Breast epithelium (tissue), 4 donors: ENCODE measurements at regions of chr20 and their contacts with region 1.

Region 1: DNA sequence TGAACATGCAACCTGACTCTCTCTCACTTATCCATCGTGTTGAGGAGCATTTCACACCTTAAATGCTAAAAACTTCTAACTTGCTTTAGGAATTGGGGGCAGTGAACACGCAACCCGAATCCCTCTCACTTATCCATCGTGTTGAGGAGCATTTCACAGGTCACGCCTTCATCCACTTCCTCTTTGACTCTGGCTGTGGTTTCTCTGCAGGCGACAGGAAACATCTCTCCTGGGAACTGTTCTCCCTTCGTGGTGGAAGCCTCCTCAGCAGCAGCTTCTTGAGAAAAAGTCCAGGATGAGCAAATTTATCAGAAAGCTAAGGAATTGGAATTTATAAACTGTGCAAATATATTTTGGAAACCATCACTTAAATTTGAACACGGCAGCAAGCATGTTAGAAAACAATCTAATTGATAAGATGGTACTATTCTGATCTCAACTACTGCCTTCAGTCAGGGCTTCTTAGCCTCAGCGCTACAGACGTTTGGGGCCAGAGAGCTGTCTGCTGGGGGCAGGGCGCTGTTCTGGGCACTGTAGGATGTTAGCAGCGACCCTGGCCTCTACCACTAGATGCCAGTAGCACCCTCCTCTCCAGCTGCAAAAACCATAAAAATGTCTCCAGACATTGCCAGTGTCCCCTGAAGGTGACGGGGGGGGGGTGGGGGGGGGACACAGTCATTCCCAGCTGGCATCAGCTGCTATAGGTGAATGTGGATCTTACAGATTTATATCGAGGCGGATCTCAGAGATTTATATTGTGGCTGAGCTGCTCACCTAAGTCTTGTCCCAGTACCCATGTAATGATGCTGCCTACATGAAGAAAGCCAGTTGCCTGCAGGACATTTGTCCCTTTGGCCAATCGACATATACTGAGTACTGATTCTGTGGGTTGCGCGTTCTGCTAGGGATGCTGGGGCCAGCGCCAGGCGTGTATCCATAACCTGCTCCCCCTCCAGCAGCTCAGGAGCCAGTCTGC is 26.2 kb downstream of the CTCFL start:
- DNase-seq: no peak
- H3K4me3 ChIP-seq: no peak overlapping the region
- H3K27ac ChIP-seq: no peak overlapping the region
- H3K4me1 ChIP-seq: no peaks in the 10 kb centered on the region
- H3K27me3 ChIP-seq: peaks cover 0 to 7% of the 10 kb centered on the region in 2 donors
- CTCF ChIP-seq: no peak
- POLR2A ChIP-seq: no peak

Region 2: GRCh38 chr20:57391074-57391554 is 107.6 kb before region 1 on chr20 and contains the start of gene RBM38:
- intact Hi-C with region 1: loop called (anchors 10 kb)
- DNase-seq: no peak
- H3K4me3 ChIP-seq: peak within 1 kb of the TSS; percentile 68 to 77 (median 73)
- H3K27ac ChIP-seq: peak within 1 kb of the TSS; percentile 79 to 81
- H3K4me1 ChIP-seq: peaks cover 0 to 17% of the 10 kb centered on the region in 2 donors
- H3K27me3 ChIP-seq: no peaks in the 10 kb centered on the region
- CTCF ChIP-seq: no peak
- POLR2A ChIP-seq: no peak
- total RNA-seq, gene RBM38: 5.1 to 13.5 (median 10.5) TPM

Region 3: DNA sequence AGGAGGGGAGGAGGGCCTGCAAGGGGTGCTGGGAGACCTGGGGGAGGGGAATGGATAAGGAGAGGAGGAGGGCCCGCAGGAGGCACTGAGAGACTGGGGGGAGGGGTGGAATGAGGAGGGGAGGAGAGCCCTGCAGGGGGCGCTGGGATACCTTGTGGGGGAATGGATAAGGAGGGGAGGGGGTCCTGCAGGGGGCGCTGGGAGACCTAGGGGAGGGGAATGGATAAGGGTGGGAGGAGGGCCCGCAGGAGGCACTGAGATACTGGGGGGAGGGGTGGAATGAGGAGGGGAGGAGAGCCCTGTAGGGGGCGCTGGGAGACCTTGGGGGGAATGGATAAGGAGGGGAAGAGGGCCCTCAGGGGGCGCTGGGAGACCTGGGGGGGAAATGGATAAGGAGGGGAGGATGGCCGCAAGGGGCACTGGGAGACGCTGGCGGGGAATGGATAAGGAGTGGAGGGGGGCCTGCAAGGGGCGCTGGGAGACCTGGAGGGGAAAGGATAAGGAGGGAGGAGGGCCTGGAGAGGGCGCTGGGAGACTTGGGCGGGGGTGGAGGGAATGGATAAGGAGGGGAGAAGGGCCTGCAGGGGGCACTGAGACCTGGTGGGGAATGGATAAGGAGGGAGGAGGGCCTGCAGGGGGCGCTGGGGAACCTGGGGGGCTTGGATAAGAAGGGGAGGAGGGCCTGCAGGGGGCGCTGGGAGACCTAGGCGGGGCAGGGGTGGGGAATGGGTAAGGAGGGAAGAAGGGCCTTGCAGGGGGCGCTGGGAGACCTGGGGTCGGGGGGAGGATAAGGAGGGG is 27.6 kb after region 1 on chr20:
- intact Hi-C with region 1: no loop called
- DNase-seq: no peak
- H3K4me3 ChIP-seq: no peak overlapping the region
- H3K27ac ChIP-seq: no peak overlapping the region
- H3K4me1 ChIP-seq: no peaks in the 10 kb centered on the region
- H3K27me3 ChIP-seq: peaks cover 0 to 3% of the 10 kb centered on the region in 2 donors
- CTCF ChIP-seq: no peak
- POLR2A ChIP-seq: no peak